Endothelial cell of umbilical vein (primary cell): ENCODE measurements at regions of chr12 and their contacts with region 1.

Region 1: GRCh38 chr12:42969357-42969756 is 379.8 kb upstream of the PRICKLE1 start:
- DNase-seq: peak; percentile 82
- H3K4me3 ChIP-seq: no peak overlapping the region
- H3K27ac ChIP-seq: peak overlapping the region; percentile 63
- H3K4me1 ChIP-seq: peaks cover 42% of the 10 kb centered on the region
- H3K27me3 ChIP-seq: no peaks in the 10 kb centered on the region
- CTCF ChIP-seq: no peak
- POLR2A ChIP-seq: peak; percentile 61

Region 2: DNA sequence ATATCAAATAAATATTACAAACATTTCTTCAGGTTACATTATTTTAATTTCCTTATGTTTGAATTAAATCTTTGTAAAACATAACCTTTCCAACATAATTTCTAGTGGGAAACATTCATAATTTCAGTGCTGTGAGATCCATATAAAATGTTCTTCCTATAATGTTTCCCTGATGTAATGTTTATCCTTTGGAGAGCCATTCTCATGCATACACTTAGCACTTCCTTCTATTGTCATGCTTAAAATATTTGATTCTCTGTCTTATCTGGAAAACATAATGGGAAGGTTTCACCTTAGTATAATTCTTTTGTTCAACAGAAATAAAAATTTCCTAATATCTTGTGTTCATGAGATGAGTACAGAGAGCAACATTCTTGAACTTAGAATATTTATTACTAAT is 110.1 kb after region 1 on chr12:
- CTCF ChIA-PET with region 1: interaction called, 4 read pairs
- POLR2A ChIA-PET with region 1: no interaction called
- dilution Hi-C with region 1: no loop called
- intact Hi-C with region 1: loop called (anchors 2 kb)
- DNase-seq: peak; percentile 85
- H3K4me3 ChIP-seq: peak overlapping the region in 1 of 3 experiments; percentile 18
- H3K27ac ChIP-seq: peak overlapping the region; percentile 93
- H3K4me1 ChIP-seq: peaks cover 27% of the 10 kb centered on the region
- H3K27me3 ChIP-seq: no peaks in the 10 kb centered on the region
- CTCF ChIP-seq: no peak
- POLR2A ChIP-seq: no peak

Region 3: GRCh38 chr12:43104524-43104923 is 135.2 kb after region 1 on chr12:
- CTCF ChIA-PET with region 1: no interaction called
- POLR2A ChIA-PET with region 1: no interaction called
- dilution Hi-C with region 1: no loop called
- intact Hi-C with region 1: no loop called
- DNase-seq: no peak
- H3K4me3 ChIP-seq: no peak overlapping the region
- H3K27ac ChIP-seq: no peak overlapping the region
- H3K4me1 ChIP-seq: no peaks in the 10 kb centered on the region
- H3K27me3 ChIP-seq: no peaks in the 10 kb centered on the region
- CTCF ChIP-seq: no peak
- POLR2A ChIP-seq: no peak